Ovary (tissue), 10 donors: ENCODE measurements at regions of chr3 and their contacts with region 1.

Region 1: DNA sequence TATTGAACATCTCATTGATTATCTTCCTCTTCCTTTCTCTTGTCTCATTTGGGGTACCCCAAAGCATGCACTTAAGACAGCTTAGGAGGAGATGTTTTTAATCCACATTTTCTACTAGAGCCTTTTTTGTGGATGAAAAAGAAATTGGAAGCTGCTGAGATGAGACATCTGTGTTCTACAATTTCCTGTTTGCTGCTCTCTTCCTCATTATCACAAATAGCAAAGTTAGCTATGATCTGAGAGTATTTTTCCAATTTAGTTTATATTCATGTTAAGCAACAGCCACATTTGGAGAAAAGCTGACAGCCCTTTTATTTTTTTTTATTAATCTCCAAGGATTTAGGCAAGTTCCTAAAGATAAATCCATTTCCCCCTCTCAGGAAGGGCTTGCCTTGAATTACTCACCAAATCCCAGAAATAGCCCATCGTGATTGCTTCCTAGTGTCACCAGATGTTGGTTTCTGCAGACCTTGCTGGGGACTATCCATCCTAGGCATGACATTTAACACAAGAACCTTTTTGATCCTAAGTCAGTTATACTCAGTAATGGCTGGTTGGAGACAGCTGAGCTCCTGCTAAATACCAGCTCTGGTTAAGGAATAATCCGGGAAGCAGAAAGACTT is 70.8 kb upstream of the FILIP1L start:
- DNase-seq: no peak
- H3K4me3 ChIP-seq: no peak overlapping the region
- H3K27ac ChIP-seq: no peak overlapping the region
- H3K4me1 ChIP-seq: peaks cover 10% of the 10 kb centered on the region
- H3K27me3 ChIP-seq: no peaks in the 10 kb centered on the region
- CTCF ChIP-seq: no peak
- EP300 ChIP-seq: no peak
- POLR2A ChIP-seq: no peak

Region 2: GRCh38 chr3:100231668-100232067 is 46.6 kb after region 1 on chr3:
- intact Hi-C with region 1: loop called in 1 of 4 experiments (anchors 10 kb)
- DNase-seq: no peak
- H3K4me3 ChIP-seq: no peak overlapping the region
- H3K27ac ChIP-seq: no peak overlapping the region
- H3K4me1 ChIP-seq: no peaks in the 10 kb centered on the region
- H3K27me3 ChIP-seq: no peaks in the 10 kb centered on the region
- CTCF ChIP-seq: no peak
- EP300 ChIP-seq: no peak
- POLR2A ChIP-seq: no peak